ENCODE measurements at regions of chr6 and their contacts with region 1.

Region 1: DNA sequence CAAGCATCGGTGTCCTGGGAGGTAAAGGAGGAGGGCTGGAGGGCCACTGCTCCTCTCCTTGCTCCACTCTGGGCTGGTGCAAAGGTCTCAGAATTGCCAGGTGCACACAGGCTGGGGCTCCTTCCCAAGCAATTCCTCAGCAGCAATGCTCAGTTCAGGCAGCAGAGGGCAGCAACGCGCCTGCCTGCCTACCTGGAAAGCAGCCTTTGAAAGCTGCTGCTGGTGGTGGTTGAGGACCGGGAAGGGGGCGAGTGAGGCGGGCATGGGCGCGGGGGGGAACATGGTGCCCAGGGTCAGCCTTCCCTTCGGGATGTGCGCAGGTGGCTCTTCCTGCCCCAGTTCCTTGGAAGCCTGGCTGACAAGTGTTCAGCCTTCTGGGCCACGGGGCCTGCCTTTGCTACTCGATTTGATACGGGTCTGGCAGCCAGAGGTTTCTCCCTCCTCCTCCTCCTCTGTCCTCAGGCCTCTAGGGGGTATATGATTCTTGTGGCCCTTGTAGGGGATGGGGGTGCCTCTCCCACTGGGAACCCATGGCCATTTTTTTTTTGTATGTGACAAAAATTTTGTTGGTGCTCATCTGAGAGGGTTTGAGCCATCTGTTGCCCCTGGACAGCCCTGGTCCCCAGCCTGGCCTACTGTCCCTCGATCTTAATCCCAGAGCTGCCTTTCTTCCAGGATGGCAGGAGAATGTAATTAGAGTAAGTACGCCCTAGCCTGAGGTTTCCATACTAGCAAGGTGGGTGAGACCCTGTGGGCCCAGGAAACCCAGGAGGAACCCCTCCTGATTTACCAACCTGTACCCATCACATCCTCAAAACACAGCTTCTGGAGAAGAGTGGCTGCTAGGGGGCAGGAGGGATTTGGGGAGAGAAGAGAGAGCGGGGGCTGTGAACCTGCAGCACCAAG is 20.1 kb downstream of the MRPS18A start:
- DNase-seq: peak; percentile 76
- ATAC-seq: peak; percentile 64
- H3K4me3 ChIP-seq: peak overlapping the region; percentile 16 to 63 (median 44)
- H3K27ac ChIP-seq: no peak overlapping the region
- H3K4me1 ChIP-seq: peaks cover 64% of the 10 kb centered on the region
- H3K27me3 ChIP-seq: peaks cover 2 to 27% of the 10 kb centered on the region in 2 experiments; a peak in 4 of 5 replicates
- CTCF ChIP-seq: peak; percentile 100
- EP300 ChIP-seq: no peak
- POLR2A ChIP-seq: no peak
- RAD21 ChIP-seq: peak; percentile 97

Region 2: DNA sequence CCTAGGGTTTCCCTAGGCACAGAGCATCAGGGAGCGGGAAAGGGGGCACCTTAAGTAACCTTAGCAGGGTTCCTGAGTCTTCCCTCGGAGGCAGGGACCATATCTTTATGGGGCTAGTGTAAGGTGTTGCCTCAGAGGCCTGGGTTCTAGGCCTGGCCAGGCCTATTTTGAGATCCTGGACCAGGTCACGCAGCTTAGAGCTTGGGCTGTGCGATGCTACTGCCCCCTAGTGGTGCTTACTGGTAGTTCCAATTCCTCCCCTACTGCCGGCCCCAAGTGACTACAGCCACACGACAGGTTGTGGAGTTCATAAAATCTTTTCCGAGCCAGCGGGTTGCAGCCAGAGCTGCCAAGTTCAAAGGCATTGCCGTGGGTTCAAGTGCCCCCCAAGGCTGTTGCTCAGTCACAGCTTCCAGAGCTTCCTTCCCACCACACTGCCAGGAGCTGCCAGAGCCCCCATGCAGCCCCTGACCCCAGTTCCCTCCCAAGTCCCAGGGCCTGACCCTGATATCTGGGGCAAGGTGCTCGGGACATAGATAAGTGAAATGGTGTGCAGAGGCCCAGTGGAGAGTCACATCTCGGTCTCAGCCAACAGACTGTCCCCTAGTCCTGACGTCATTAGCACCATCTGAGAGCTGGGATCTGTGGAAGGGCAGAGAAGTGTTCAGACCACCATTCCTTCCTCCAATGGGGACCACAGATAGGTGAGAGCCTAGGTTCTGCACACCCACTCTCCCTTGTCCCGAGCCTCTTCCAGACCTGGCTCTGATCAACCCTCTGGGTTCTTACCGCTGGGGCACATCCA is 160.6 kb before region 1 on chr6:
- CTCF ChIA-PET with region 1: no interaction called
- POLR2A ChIA-PET with region 1: no interaction called
- in situ Hi-C with region 1: no loop called
- intact Hi-C with region 1: no loop called
- DNase-seq: peak; percentile 76
- ATAC-seq: peak; percentile 71
- H3K4me3 ChIP-seq: no peak overlapping the region; a peak in 1 of 6 replicates
- H3K27ac ChIP-seq: no peak overlapping the region
- H3K4me1 ChIP-seq: peaks cover 47% of the 10 kb centered on the region
- H3K27me3 ChIP-seq: peaks cover 3 to 7% of the 10 kb centered on the region in 2 experiments; a peak in 4 of 5 replicates
- CTCF ChIP-seq: peak; percentile 98
- EP300 ChIP-seq: no peak
- POLR2A ChIP-seq: no peak
- RAD21 ChIP-seq: peak; percentile 92

Region 3: DNA sequence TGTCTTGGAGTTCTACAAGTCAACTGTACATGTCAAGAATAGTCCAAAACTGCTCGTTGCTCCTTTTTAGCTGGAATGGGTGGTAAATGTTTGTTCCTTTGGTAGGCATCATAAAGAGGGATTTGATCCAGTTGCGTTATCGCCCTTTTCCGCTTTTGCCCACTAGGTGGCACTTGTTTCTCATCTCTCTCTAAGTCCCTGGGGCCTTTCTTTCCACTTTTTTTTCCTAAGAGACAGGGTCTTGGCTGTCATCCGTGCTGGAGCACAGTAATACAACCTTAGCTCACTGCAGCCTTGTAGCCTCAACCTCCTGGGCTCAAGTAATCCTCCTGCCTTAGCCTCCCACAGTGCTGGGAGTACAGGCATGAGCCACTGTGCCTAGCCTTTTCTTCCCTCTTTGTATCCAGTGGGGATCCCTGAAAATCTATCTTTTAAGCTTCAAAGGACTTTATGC is 59.2 kb before region 1 on chr6:
- CTCF ChIA-PET with region 1: no interaction called
- POLR2A ChIA-PET with region 1: no interaction called
- in situ Hi-C with region 1: no loop called
- intact Hi-C with region 1: loop called (anchors 10 kb)
- DNase-seq: peak; percentile 68
- ATAC-seq: peak; percentile 89
- H3K4me3 ChIP-seq: no peak overlapping the region
- H3K27ac ChIP-seq: no peak overlapping the region
- H3K4me1 ChIP-seq: no peaks in the 10 kb centered on the region
- H3K27me3 ChIP-seq: no peaks in the 10 kb centered on the region
- CTCF ChIP-seq: peak; percentile 90
- EP300 ChIP-seq: no peak
- POLR2A ChIP-seq: no peak
- RAD21 ChIP-seq: peak; percentile 54

Region 4: DNA sequence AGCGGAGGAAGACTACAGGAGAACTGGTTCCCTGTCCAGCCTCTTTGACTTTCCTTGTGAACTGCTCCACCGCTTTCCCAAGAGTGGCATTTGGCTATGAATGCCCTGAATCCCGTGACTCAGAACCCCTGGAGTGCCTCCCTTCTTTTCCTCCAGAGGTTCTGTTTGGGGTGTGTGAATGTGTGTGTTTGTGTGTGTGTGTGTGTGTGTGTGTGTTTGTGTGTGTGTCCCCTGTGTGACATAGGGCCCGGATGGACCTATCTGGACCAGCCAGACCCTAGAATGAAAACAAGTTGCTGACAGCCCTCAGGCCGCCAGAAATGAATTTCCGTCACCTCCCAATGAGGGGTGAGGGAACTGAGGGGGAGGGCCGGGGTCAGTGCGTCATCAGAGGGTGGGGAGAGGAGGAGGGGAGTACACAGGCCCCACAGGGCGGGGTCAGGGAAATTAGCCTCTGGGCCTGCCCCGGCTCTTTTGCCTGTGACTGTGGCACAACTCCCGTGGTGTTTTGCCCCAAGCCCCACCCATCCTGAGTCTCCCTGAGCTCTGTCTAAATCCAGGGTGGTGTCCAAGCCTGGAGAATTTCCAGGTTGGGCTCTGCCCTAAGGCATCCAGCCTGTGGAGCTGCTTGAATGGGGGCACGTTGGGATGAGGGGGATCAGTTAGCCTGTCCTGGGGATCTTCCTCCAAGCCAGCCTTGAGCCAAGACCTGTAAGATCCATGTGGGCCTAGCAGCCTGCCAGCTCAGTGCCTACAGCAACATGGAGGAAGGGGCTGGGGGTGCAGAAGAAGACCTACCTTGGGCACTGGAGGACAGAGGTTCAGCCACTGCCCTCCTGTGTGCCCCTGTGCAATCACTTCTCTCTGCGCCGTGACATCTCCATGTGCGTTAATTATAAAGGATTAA is 35.3 kb after region 1 on chr6:
- CTCF ChIA-PET with region 1: interaction called, 4 read pairs
- POLR2A ChIA-PET with region 1: interaction called, 10 read pairs
- in situ Hi-C with region 1: no loop called
- intact Hi-C with region 1: loop called (anchors 2 kb)
- DNase-seq: peak; percentile 93
- ATAC-seq: peak; percentile 80
- H3K4me3 ChIP-seq: peak overlapping the region in 2 of 3 experiments; percentile 24 to 54; a peak in 3 of 6 replicates
- H3K27ac ChIP-seq: no peak overlapping the region
- H3K4me1 ChIP-seq: peaks cover 96% of the 10 kb centered on the region
- H3K27me3 ChIP-seq: peaks cover 0 to 19% of the 10 kb centered on the region in 2 experiments; a peak in 3 of 5 replicates
- CTCF ChIP-seq: no peak
- EP300 ChIP-seq: peak in 1 of 2 experiments; percentile 54; a peak in 1 of 4 replicates
- POLR2A ChIP-seq: no peak; a peak in 1 of 4 replicates
- RAD21 ChIP-seq: no peak

Region 5: GRCh38 chr6:43758617-43759050 is 91.1 kb after region 1 on chr6:
- CTCF ChIA-PET with region 1: interaction called, 3 read pairs
- POLR2A ChIA-PET with region 1: no interaction called
- in situ Hi-C with region 1: no loop called
- intact Hi-C with region 1: loop called (anchors 5 kb)
- DNase-seq: no peak
- ATAC-seq: peak; percentile 83
- H3K4me3 ChIP-seq: no peak overlapping the region
- H3K27ac ChIP-seq: no peak overlapping the region
- H3K4me1 ChIP-seq: peaks cover 46% of the 10 kb centered on the region
- H3K27me3 ChIP-seq: peaks cover 13 to 52% of the 10 kb centered on the region in 2 experiments; a peak in 4 of 5 replicates
- CTCF ChIP-seq: peak; percentile 86
- EP300 ChIP-seq: no peak
- POLR2A ChIP-seq: no peak
- RAD21 ChIP-seq: peak; percentile 80

Region 6: DNA sequence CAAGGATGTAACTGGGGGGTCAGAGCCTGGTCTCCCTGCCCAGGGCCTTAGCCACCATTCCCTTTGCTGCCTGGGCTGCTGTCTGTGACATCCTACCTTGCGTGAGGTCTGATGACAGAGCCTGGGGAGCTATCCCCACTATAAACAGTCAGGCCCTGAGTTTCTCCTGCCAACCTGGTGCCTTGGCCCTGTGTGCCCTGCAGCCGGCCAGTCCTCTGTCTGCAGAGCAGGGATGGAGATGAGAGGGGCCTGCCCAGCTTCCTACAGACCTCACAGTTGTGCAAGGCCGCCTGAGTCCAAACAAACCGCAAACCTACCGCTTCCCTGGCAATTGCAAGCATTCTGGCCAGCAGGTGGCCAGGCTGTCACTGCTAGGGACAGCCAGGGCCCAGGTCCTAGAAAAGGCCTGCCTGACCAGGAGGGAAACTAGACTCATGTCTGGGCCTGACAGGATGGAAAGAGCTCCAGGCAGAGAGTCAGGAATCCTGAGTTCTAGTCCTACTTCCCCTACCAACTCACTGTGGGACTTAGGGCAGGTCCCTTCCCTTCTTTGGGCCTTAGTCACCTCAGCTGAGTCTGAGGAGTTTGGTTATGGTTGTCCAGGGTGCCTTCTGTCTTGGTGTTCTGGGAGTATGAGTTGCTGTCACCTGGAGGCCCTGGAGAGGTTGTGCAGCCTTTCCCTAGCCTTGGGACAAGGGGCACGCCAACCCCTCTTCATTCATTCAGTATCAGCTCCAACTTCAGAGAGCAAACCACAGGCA is 188.7 kb after region 1 on chr6:
- CTCF ChIA-PET with region 1: no interaction called
- POLR2A ChIA-PET with region 1: no interaction called
- in situ Hi-C with region 1: no loop called
- intact Hi-C with region 1: loop called (anchors 5 kb)
- DNase-seq: peak; percentile 86
- ATAC-seq: peak; percentile 91
- H3K4me3 ChIP-seq: no peak overlapping the region
- H3K27ac ChIP-seq: no peak overlapping the region
- H3K4me1 ChIP-seq: peaks cover 85% of the 10 kb centered on the region
- H3K27me3 ChIP-seq: peaks cover 3 to 4% of the 10 kb centered on the region in 2 experiments; a peak in 1 of 5 replicates
- CTCF ChIP-seq: peak; percentile 99
- EP300 ChIP-seq: peak in 1 of 2 experiments; percentile 20; a peak in 1 of 4 replicates
- POLR2A ChIP-seq: no peak
- RAD21 ChIP-seq: peak; percentile 96

Region 7: GRCh38 chr6:43919774-43920173 is 252.3 kb after region 1 on chr6:
- CTCF ChIA-PET with region 1: no interaction called
- POLR2A ChIA-PET with region 1: no interaction called
- in situ Hi-C with region 1: no loop called
- intact Hi-C with region 1: no loop called
- DNase-seq: no peak
- ATAC-seq: no peak
- H3K4me3 ChIP-seq: no peak overlapping the region
- H3K27ac ChIP-seq: no peak overlapping the region
- H3K4me1 ChIP-seq: peaks cover 74% of the 10 kb centered on the region
- H3K27me3 ChIP-seq: no peaks in the 10 kb centered on the region
- CTCF ChIP-seq: no peak
- EP300 ChIP-seq: no peak
- POLR2A ChIP-seq: no peak
- RAD21 ChIP-seq: no peak

Region 8: GRCh38 chr6:44074439-44075136 is 407.1 kb after region 1 on chr6:
- CTCF ChIA-PET with region 1: interaction called, 16 read pairs
- POLR2A ChIA-PET with region 1: interaction called, 3 read pairs
- in situ Hi-C with region 1: loop called (anchors 5 kb)
- intact Hi-C with region 1: loop called (anchors 1 kb)
- DNase-seq: peak; percentile 78
- ATAC-seq: peak; percentile 64
- H3K4me3 ChIP-seq: peak overlapping the region; percentile 23 to 74 (median 46)
- H3K27ac ChIP-seq: peak overlapping the region; percentile 57
- H3K4me1 ChIP-seq: peaks cover 85% of the 10 kb centered on the region
- H3K27me3 ChIP-seq: no peaks in the 10 kb centered on the region
- CTCF ChIP-seq: peak; percentile 99
- EP300 ChIP-seq: no peak
- POLR2A ChIP-seq: no peak
- RAD21 ChIP-seq: peak; percentile 85

Measured in HepG2 (cell line).